CD4-positive, alpha-beta T cell (primary cell): ENCODE measurements at regions of chr22 and their contacts with region 1.

Region 1: DNA sequence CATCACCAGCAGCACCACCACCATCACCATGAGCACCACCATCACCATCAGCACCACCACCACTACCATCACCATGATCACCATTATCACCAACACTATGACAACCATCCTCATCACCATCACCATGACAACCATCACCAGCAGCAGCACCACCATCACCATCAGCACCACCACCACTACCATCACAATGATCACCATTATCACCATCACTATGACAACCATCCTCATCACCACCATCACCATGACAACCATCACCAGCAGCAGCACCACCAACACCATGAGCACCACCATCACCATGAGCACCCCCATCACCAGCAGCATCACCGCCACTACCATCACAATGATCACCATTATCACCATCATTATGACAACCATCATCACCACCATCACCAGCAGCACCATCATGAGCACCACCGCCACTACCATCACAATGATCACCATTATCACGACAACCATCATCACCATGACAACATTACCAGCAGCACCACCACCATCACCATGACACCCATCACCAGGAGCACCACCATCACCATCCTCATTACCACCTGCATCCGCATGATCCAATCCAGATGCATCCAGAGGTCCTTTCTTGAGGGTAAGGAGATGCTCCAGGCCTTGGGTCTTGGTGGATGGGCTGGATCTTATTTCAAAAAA is 23.8 kb downstream of the PHF21B start:
- DNase-seq: no peak
- ATAC-seq: no peak
- H3K4me3 ChIP-seq: no peak overlapping the region
- H3K4me3 Mint-ChIP-seq: no peak overlapping the region
- H3K27ac ChIP-seq: no peak overlapping the region
- H3K27ac Mint-ChIP-seq: no peak overlapping the region
- H3K4me1 ChIP-seq: no peaks in the 10 kb centered on the region
- H3K4me1 Mint-ChIP-seq: no peaks in the 10 kb centered on the region
- H3K27me3 ChIP-seq: peaks cover 0 to 3% of the 10 kb centered on the region in 2 experiments
- H3K27me3 Mint-ChIP-seq: peaks cover 27% of the 10 kb centered on the region
- CTCF ChIP-seq: no peak

Region 2: GRCh38 chr22:44955102-44955501 is 30.9 kb before region 1 on chr22:
- CTCF ChIA-PET with region 1: no interaction called
- POLR2A ChIA-PET with region 1: no interaction called
- intact Hi-C with region 1: loop called in 1 of 2 experiments (anchors 2 kb)
- DNase-seq: no peak
- ATAC-seq: no peak
- H3K4me3 ChIP-seq: no peak overlapping the region
- H3K4me3 Mint-ChIP-seq: no peak overlapping the region
- H3K27ac ChIP-seq: no peak overlapping the region
- H3K27ac Mint-ChIP-seq: no peak overlapping the region
- H3K4me1 ChIP-seq: no peaks in the 10 kb centered on the region
- H3K4me1 Mint-ChIP-seq: no peaks in the 10 kb centered on the region
- H3K27me3 ChIP-seq: peaks cover 0 to 5% of the 10 kb centered on the region in 2 experiments
- H3K27me3 Mint-ChIP-seq: no peaks in the 10 kb centered on the region
- CTCF ChIP-seq: no peak